ENCODE measurements at regions of chr6 and their contacts with region 1.

Region 1: DNA sequence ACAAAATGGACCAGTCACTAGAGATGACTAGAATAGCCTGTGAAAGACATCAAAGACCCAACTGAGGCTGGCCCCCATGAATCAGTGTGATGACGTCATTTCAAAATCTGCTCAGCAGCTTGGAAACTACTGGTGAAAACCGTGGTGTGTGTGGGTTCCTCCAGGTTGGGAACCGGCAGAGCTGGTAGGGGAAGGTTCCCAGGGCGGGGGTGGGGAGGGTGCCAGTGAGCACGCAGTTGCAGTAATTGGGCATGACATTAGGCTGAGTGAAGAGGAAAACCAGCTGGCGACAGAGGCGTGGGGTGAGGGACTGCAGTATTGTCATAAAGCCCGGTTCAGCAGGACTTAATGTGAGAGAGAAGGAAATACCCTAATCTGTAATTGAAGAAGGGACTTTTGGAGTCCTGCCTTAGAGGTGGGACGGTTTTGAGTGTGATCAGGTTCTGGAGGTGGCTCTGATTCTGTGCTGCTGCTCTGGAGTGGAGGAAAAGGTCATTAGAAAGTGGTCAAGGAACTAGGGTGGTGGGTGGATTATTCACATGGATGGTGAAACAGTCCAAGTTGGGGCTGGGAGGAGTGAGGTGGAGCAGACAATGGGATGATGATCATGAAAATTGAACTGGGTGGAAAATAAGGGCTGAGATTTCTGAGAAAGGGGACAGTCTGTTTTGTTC is 52.0 kb upstream of the MTHFD1L start:
- DNase-seq: no peak
- ATAC-seq: no peak
- H3K4me3 ChIP-seq: no peak overlapping the region
- H3K27ac ChIP-seq: no peak overlapping the region
- H3K4me1 ChIP-seq: no peaks in the 10 kb centered on the region; a peak in 1 of 5 replicates
- H3K27me3 ChIP-seq: peaks cover 25 to 37% of the 10 kb centered on the region in 2 experiments; a peak in 4 of 5 replicates
- CTCF ChIP-seq: no peak
- EP300 ChIP-seq: no peak
- POLR2A ChIP-seq: no peak
- RAD21 ChIP-seq: no peak

Region 2: DNA sequence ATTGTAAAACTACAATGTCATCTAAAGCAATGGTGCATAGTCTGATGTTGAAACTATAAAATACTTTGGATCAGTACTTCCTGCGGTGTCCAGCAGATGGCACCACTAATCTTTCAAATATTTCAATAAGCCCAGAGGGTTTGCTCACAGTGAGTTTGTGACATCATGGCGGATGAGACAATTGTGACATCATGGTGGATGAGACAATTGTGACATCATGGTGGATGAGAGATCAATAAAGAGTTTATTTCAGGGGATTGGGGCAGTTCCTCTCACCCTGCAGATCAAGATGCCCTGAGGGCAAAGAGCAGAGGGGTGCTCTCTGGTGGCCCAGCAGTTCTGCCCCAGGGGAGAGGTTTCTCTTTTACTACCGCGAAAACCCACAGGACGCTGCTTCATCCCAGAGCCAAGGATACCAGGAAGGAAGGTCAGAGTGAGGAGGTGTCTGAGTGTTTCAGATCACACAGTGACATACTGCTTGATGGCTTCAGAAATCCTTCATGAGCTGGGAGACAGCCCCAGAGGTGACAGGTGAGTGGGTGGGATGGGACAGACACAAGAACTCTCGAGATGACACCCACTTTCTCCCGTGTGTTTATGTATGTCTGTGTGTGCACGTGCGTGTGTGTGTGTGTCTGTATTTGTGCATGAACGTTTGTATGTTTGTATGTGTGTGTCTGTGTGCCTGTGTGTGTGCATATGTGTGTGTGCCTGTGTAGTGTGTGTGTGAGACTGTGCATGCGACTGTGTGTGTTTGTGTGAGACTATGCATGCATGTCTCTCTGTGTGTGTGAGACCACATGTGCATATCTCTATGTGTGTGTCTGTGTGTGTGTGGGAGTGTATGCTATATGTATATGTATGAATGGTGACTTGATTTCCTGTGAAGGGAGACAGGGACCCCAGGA is 879.0 kb before region 1 on chr6:
- CTCF ChIA-PET with region 1: interaction called, 13 read pairs
- POLR2A ChIA-PET with region 1: no interaction called
- in situ Hi-C with region 1: loop called (anchors 5 kb)
- intact Hi-C with region 1: loop called (anchors 5 kb)
- DNase-seq: peak; percentile 61 to 80 (median 64)
- ATAC-seq: peak; percentile 66
- H3K4me3 ChIP-seq: no peak overlapping the region
- H3K27ac ChIP-seq: no peak overlapping the region
- H3K4me1 ChIP-seq: peaks cover 0 to 9% of the 10 kb centered on the region in 2 experiments; a peak in 2 of 5 replicates
- H3K27me3 ChIP-seq: peaks cover 32 to 46% of the 10 kb centered on the region in 2 experiments
- CTCF ChIP-seq: peak; percentile 73 to 95 (median 89)
- EP300 ChIP-seq: no peak
- POLR2A ChIP-seq: no peak
- RAD21 ChIP-seq: peak; percentile 95 to 96

Region 3: GRCh38 chr6:150068720-150069648 is 744.5 kb before region 1 on chr6 and contains the start of gene ULBP3:
- CTCF ChIA-PET with region 1: interaction called, 4 read pairs
- POLR2A ChIA-PET with region 1: no interaction called
- in situ Hi-C with region 1: loop called (anchors 25 kb)
- intact Hi-C with region 1: loop called (anchors 5 kb)
- DNase-seq: peak; percentile 64 to 86 (median 84)
- ATAC-seq: peak; percentile 88
- H3K4me3 ChIP-seq: peak within 1 kb of the TSS; percentile 28; the same call in 1 of the 2 replicates
- H3K27ac ChIP-seq: no peak within 1 kb of the TSS
- H3K4me1 ChIP-seq: peaks cover 5 to 24% of the 10 kb centered on the region in 2 experiments; a peak in 3 of 5 replicates
- H3K27me3 ChIP-seq: peaks cover 18 to 52% of the 10 kb centered on the region in 2 experiments
- CTCF ChIP-seq: peak; percentile 45 to 70 (median 50); a peak in 5 of 6 replicates
- EP300 ChIP-seq: no peak
- POLR2A ChIP-seq: no peak
- RAD21 ChIP-seq: peak in 1 of 2 experiments; percentile 18; a peak in 1 of 4 replicates
- polyA plus RNA-seq, gene ULBP3: not detected

Region 4: DNA sequence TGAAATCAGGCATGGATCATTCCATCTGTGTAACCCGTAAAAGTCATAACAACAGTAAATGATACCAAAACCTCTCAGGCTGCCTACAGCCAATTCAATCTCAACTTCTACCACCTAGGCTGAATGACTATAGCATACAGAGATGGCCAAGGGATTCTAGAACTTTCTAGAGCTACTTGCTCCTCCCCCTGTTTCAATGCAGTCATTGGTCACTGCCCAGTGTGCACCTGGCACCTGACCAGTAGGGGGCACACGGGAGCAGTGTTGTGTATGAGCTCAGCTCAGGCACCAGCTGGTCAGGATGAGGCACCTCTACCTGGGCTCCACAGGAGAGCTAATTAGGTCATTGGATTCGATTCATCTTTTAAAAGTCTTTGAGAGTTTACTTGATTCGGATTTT is 127.6 kb before region 1 on chr6:
- CTCF ChIA-PET with region 1: interaction called, 7 read pairs
- POLR2A ChIA-PET with region 1: no interaction called
- in situ Hi-C with region 1: no loop called
- intact Hi-C with region 1: loop called (anchors 2 kb)
- DNase-seq: peak; percentile 71 to 89 (median 82)
- ATAC-seq: peak; percentile 100
- H3K4me3 ChIP-seq: no peak overlapping the region
- H3K27ac ChIP-seq: no peak overlapping the region
- H3K4me1 ChIP-seq: no peaks in the 10 kb centered on the region
- H3K27me3 ChIP-seq: peaks cover 31 to 49% of the 10 kb centered on the region in 2 experiments; a peak in 4 of 5 replicates
- CTCF ChIP-seq: peak; percentile 85 to 98 (median 85)
- EP300 ChIP-seq: no peak
- POLR2A ChIP-seq: no peak
- RAD21 ChIP-seq: peak; percentile 31 to 63; a peak in 3 of 4 replicates

Region 5: DNA sequence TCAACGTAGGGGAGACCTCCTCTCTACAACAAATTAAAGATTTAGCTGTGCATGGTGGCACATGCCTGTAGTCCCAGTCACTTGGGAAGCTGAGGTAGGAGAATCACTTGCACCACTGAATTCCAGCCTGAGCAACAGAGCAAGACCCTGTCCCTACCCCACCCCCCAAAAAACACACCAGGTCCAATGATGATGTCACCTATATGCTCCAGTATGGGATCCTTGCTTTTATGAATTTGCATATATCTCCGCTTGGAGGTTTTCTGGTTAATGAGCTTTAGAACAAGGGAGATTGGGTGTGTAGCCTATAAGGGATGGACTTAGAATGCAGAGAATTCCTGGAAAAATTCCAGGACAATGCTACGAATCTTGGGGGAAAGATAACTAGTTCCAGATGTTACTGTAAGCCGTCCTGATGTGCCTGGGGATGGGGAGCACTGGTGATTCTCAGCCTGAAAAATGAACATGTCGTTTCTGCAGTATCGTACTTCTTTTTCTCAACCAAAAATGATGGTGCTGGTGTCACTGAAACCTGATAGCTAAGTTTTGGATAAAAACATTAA is 516.8 kb after region 1 on chr6:
- CTCF ChIA-PET with region 1: interaction called, 9 read pairs
- POLR2A ChIA-PET with region 1: no interaction called
- in situ Hi-C with region 1: loop called (anchors 5 kb)
- intact Hi-C with region 1: loop called (anchors 2 kb)
- DNase-seq: no peak
- ATAC-seq: no peak
- H3K4me3 ChIP-seq: no peak overlapping the region
- H3K27ac ChIP-seq: no peak overlapping the region
- H3K4me1 ChIP-seq: peaks cover 0 to 9% of the 10 kb centered on the region in 2 experiments; a peak in 1 of 5 replicates
- H3K27me3 ChIP-seq: peaks cover 49 to 51% of the 10 kb centered on the region in 2 experiments
- CTCF ChIP-seq: no peak
- EP300 ChIP-seq: no peak
- POLR2A ChIP-seq: no peak
- RAD21 ChIP-seq: no peak

Measured in K562 (cell line).